Activated naive CD4-positive, alpha-beta T cell treated with anti-CD3 and anti-CD28 coated beads for 36 hours (primary cell): ENCODE measurements at regions of chr4 and their contacts with region 1.

Region 1: DNA sequence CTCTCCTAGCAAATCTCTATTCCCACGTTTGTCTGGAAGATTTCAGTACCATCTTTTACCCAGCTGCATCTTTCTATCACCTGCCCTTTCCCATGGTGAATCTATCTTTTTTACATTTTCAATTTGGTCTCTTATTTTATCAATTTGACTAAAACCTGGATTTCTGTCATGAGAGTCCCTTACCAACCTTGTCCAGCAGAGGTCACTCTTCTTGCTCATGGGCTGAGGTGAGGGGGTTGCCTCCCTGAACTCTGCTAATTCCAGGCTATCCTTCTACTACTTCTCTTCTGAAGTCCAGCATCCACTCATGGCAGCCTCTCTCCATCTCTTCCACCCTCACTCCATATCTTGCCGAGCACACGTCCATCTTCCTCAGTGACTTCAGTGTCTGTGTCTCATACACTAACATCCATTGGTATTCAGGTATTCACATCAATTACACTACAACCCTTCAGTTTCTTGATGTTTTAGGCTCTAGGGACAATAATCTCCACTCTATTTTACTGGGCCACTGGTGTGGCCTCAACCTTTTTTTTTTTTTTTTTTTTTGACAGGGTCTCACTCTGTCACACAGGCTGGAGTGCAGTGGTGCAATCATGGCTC is 17.8 kb upstream of the ZNF827 start:
- DNase-seq: peak; percentile 41
- H3K4me3 Mint-ChIP-seq: no peak overlapping the region
- H3K27ac Mint-ChIP-seq: no peak overlapping the region
- H3K4me1 Mint-ChIP-seq: no peaks in the 10 kb centered on the region
- H3K27me3 Mint-ChIP-seq: no peaks in the 10 kb centered on the region

Region 2: GRCh38 chr4:145473203-145473602 is 483.2 kb before region 1 on chr4:
- CTCF ChIA-PET with region 1: no interaction called
- intact Hi-C with region 1: no loop called
- DNase-seq: no peak
- H3K4me3 Mint-ChIP-seq: no peak overlapping the region
- H3K27ac Mint-ChIP-seq: no peak overlapping the region
- H3K4me1 Mint-ChIP-seq: no peaks in the 10 kb centered on the region
- H3K27me3 Mint-ChIP-seq: peaks cover 9% of the 10 kb centered on the region

Region 3: DNA sequence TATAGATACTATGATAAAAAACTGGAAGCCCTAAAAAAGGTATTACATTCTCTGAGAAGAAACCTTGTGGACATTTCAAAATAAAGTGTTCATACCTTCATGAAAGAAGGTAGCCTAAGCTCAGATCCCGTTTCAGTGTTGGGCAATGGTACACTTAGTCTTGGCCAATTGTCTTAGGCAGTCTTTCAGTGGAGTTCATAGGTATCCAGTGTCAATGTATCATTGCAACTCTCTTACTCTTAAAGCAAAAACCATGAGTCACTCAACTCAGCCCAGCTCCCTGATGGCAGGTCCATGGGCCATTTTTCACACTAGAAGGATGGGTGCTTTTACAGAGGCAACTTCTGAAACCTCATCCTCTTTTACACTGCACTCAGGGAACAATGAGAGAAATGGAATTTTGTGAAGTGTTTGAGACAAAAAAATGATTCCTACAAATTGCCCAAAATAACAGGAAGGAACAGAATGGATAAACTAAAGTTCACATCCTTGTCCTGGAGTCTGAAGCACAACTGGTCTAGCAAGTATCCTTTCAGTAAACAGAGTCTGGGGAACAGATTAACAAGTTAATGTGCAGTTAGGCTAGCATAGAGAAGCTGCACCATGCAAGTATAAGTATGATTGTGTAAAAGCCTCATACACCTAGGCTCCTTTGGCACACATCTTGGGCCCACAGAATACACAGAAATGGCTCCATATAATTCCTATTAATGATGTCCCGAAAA is 10.8 kb before region 1 on chr4:
- CTCF ChIA-PET with region 1: interaction called, 12 read pairs
- intact Hi-C with region 1: no loop called
- DNase-seq: no peak
- H3K4me3 Mint-ChIP-seq: no peak overlapping the region
- H3K27ac Mint-ChIP-seq: no peak overlapping the region
- H3K4me1 Mint-ChIP-seq: peaks cover 1% of the 10 kb centered on the region
- H3K27me3 Mint-ChIP-seq: peaks cover 5% of the 10 kb centered on the region

Region 4: GRCh38 chr4:146269228-146269653 is 312.9 kb after region 1 on chr4:
- CTCF ChIA-PET with region 1: no interaction called
- intact Hi-C with region 1: no loop called
- DNase-seq: no peak
- H3K4me3 Mint-ChIP-seq: no peak overlapping the region
- H3K27ac Mint-ChIP-seq: no peak overlapping the region
- H3K4me1 Mint-ChIP-seq: no peaks in the 10 kb centered on the region
- H3K27me3 Mint-ChIP-seq: no peaks in the 10 kb centered on the region

Region 5: GRCh38 chr4:146654687-146655520 is 698.5 kb after region 1 on chr4:
- CTCF ChIA-PET with region 1: no interaction called
- intact Hi-C with region 1: no loop called
- DNase-seq: peak; percentile 29
- H3K4me3 Mint-ChIP-seq: peak overlapping the region; percentile 54
- H3K27ac Mint-ChIP-seq: no peak overlapping the region
- H3K4me1 Mint-ChIP-seq: peaks cover 10% of the 10 kb centered on the region
- H3K27me3 Mint-ChIP-seq: peaks cover 67% of the 10 kb centered on the region

Region 6: DNA sequence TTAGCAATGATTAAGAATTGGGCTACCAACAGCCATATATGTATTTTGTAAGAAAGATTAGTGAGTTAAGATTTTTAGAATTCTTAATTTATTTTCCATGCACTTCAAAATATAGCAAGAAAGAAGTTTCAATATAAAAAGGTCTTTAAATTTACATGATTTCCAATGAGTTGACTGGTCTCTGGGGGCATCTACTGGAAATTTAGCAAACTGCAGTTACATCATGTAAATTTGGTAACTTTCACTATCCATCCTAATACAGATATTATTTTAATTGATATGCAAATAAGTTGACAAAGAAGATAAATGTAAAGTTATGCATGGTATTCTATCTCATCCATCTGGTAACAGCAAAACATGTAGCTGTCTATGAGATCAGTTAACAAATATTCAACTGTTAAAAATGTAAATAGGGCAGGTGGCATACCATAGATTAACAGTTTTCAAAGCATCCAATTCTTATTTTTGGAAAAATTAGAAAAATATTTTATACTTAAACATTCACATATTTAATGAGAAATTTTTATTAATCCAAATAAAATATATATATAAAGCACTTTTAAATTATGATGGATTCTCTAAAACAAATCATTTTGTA is 960.2 kb after region 1 on chr4:
- CTCF ChIA-PET with region 1: no interaction called
- intact Hi-C with region 1: loop called (anchors 5 kb)
- DNase-seq: peak; percentile 28
- H3K4me3 Mint-ChIP-seq: no peak overlapping the region
- H3K27ac Mint-ChIP-seq: no peak overlapping the region
- H3K4me1 Mint-ChIP-seq: no peaks in the 10 kb centered on the region
- H3K27me3 Mint-ChIP-seq: peaks cover 4% of the 10 kb centered on the region